Testis (tissue), 5 donors: ENCODE measurements at regions of chr5 and their contacts with region 1.

Region 1: GRCh38 chr5:88680253-88681132 is 202.5 kb downstream of the MEF2C start:
- DNase-seq: peak; percentile 81
- H3K4me3 ChIP-seq: peak overlapping the region; percentile 47 to 48
- H3K27ac ChIP-seq: no peak overlapping the region
- H3K4me1 ChIP-seq: peaks cover 4% of the 10 kb centered on the region
- H3K27me3 ChIP-seq: no peaks in the 10 kb centered on the region
- CTCF ChIP-seq: peak; percentile 81 to 93 (median 82)
- POLR2A ChIP-seq: no peak

Region 2: DNA sequence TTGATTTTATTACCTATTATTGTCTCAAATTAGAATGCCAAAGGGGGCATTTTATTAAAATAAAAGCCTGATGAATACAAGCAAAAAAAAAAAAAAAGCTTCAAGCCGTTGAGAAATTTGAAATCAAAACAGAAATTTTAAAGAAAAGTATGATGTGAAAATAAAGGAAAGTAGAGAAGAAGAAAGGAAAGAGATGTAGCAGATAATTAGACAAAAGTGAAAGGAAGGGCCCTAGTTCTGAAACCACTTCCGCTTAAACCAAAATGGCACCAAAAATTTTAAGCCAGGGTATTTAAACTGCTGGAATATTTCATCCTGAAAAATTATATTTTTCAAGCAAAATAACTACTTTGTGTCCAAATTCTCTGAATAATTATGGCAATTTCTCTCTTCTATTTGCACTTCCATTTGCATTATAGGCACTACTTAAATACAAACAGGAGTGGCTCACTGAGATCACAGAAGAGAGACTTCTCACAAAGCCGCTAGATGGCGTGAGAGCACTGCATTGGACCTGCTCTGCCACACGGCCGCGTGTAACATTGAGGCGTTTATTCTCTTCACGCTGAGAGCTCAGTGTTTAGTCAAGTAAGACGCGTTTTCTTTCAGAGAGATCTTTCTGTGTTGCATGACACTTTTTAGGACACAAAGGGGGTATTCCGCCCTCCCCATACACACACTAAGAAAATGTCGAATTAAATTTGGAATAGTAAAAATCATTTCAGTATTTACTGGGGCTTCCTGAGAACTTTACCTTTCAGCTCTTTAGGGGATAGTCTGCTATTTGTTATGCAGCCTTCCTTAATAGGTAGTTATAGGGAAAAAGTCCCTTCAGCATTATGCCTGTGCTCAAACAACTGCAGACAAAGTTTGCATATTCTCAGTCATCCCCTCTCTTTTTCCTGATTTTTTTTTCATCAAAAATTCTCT is 899.4 kb before region 1 on chr5:
- intact Hi-C with region 1: loop called (anchors 10 kb)
- DNase-seq: peak; percentile 89
- H3K4me3 ChIP-seq: no peak overlapping the region
- H3K27ac ChIP-seq: no peak overlapping the region
- H3K4me1 ChIP-seq: no peaks in the 10 kb centered on the region
- H3K27me3 ChIP-seq: no peaks in the 10 kb centered on the region
- CTCF ChIP-seq: peak; percentile 68 to 86 (median 70)
- POLR2A ChIP-seq: no peak

Region 3: GRCh38 chr5:88997937-88998336 is 317.4 kb after region 1 on chr5:
- intact Hi-C with region 1: no loop called
- DNase-seq: no peak
- H3K4me3 ChIP-seq: no peak overlapping the region
- H3K27ac ChIP-seq: no peak overlapping the region
- H3K4me1 ChIP-seq: no peaks in the 10 kb centered on the region
- H3K27me3 ChIP-seq: no peaks in the 10 kb centered on the region
- CTCF ChIP-seq: no peak
- POLR2A ChIP-seq: no peak